ENCODE measurements at regions of chr7 and their contacts with region 1.

Region 1: GRCh38 chr7:2863461-2864066 is 19.5 kb upstream of the GNA12 start:
- DNase-seq: peak; percentile 85 to 96 (median 94)
- H3K4me3 ChIP-seq: peak overlapping the region in 4 of 7 experiments; percentile 11 to 60 (median 32)
- H3K27ac ChIP-seq: no peak overlapping the region
- H3K4me1 ChIP-seq: peaks cover 3 to 30% (median 21%) of the 10 kb centered on the region in 4 experiments
- H3K27me3 ChIP-seq: no peaks in the 10 kb centered on the region

Region 2: DNA sequence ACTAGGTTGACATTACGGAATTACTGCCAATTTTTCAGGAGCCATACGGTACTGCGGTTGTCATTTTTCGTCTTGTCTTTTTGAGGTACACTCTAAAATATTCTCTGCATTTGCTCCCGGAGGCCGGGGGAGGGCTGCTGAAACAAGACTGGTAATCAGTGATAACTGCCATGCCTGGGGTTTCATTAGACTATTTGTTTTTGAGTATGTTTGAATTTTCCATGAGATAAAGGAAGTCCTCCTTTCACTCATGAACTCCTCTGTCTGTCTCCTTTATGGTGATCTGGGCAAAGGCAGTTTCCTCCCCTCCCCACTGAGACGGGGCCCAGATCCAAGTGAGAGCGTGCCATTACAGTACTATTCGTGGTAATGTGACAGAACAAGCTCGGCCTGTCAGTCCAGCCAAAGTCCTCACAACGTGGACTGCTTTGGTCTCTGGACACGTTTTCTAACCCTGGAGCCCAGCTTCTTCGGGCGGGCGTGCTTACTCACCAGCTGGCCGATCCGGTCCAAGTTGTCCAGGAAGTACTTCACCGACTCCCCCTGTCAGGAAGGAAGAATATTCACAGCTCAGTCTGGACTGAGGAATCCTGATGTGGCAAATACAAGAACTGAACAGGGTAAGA is 130.5 kb before region 1 on chr7:
- CTCF ChIA-PET with region 1: interaction called, 10 read pairs
- POLR2A ChIA-PET with region 1: interaction called, 4 read pairs
- DNase-seq: peak in 2 of 3 donors; percentile 48 to 60
- H3K4me3 ChIP-seq: peak overlapping the region in 2 of 7 experiments; percentile 27 to 32
- H3K27ac ChIP-seq: peak overlapping the region; percentile 98 to 99
- H3K4me1 ChIP-seq: peaks cover 17 to 100% (median 89%) of the 10 kb centered on the region in 4 experiments
- H3K27me3 ChIP-seq: no peaks in the 10 kb centered on the region

Region 3: GRCh38 chr7:2880874-2881533 is 17.4 kb after region 1 on chr7:
- CTCF ChIA-PET with region 1: interaction called, 17 read pairs
- POLR2A ChIA-PET with region 1: no interaction called
- DNase-seq: no peak
- H3K4me3 ChIP-seq: no peak overlapping the region
- H3K27ac ChIP-seq: no peak overlapping the region
- H3K4me1 ChIP-seq: peaks cover 0 to 46% (median 32%) of the 10 kb centered on the region in 4 experiments
- H3K27me3 ChIP-seq: no peaks in the 10 kb centered on the region

Region 4: DNA sequence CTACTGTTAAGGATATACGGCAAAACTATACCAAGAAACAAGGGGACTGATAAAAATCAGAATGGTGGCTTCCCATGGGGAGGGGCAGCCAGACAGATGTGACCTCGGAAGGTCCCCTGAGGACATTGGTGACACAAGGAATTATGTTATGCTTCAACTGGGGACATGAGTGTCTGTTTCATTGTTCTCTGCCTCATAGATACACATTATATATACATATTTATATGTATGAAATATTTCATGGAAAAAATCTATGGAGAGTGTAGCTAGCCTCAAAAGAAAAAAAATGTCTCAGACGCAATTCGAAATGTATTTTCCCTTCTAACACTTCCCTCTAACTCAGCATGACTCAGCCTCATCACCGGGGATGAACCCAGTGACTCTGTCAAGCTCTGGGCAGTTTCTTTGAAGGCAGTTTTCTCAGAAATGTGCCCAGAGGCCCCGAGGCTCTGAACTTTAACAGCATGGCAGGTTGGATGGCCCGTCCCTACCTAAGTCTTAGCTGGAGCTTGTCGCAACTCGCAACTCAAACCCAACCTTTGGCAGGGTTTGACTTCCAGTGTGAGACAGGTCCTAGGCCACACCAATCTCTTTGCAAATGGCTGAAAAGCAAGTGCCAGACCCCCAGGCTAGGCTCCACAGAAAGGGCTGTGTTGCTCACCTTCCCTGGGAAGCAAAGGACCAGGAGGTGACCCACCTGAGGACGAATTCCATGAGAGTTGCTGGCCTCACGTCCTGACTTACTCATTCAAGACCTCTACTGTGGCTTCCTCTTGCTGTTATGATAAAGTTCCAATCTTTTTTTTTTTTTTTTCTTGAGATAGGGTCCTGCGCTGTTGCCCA is 93.2 kb after region 1 on chr7:
- CTCF ChIA-PET with region 1: no interaction called
- POLR2A ChIA-PET with region 1: no interaction called
- DNase-seq: peak; percentile 57 to 90 (median 86)
- H3K4me3 ChIP-seq: no peak overlapping the region
- H3K27ac ChIP-seq: peak overlapping the region; percentile 34 to 78
- H3K4me1 ChIP-seq: peaks cover 2 to 47% (median 24%) of the 10 kb centered on the region in 4 experiments
- H3K27me3 ChIP-seq: no peaks in the 10 kb centered on the region

Region 5: GRCh38 chr7:3146571-3147226 is 283.1 kb after region 1 on chr7:
- CTCF ChIA-PET with region 1: interaction called, 20 read pairs
- POLR2A ChIA-PET with region 1: no interaction called
- DNase-seq: peak; percentile 70 to 94 (median 88)
- H3K4me3 ChIP-seq: peak overlapping the region in 2 of 7 experiments; percentile 2 to 45
- H3K27ac ChIP-seq: no peak overlapping the region
- H3K4me1 ChIP-seq: peaks cover 2 to 40% (median 36%) of the 10 kb centered on the region in 4 experiments
- H3K27me3 ChIP-seq: no peaks in the 10 kb centered on the region

Measured in common myeloid progenitor, CD34-positive (primary cell).